ENCODE measurements at regions of chr10 and their contacts with region 1.

Region 1: GRCh38 chr10:88990384-88991160 is at the start of gene FAS:
- DNase-seq: peak; percentile 91
- ATAC-seq: peak; percentile 83
- total RNA-seq, gene FAS: 4.7 TPM

Region 2: GRCh38 chr10:88835096-88835909 is 155.3 kb before region 1 on chr10:
- intact Hi-C with region 1: loop called (anchors 5 kb)
- DNase-seq: peak; percentile 83
- ATAC-seq: peak; percentile 94

Region 3: DNA sequence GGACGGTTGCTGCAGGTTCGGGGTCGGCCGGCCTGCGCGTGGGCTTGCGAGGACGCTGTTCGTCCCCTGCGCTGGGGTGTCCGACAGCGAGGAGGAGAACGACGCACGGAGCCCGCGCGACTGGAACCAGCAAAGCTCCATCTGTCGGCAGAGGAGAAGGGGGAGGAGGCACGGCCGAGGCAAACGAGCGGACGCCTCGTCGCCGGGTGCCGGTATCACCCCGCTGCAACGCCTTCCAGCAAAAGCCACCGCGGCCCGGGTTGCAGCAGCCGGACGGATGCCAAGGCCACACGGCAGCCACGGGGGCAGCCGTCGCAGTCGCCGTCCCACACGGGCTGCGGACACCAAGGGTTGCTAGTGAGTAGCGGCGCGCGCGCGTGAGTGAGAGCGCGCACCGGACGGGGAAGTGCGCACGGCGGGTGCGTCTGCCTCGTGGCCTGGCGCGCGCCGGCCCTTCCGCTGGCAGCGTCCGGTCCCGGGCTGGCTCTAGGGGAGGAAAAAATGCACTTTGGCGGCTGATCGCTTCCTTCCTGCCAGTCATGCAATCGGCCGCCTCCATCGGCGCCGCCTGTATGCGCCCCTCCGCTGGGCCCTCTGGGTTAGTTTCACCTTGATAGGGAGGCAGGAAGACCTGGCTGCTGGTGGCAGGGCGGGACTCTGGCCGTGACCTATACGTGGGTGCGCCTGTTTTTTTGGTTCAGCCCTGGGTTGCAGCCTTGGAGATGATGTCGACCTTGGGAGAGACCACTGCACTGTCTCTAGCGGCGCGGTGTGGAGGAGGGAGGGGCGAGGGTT is 110.1 kb before region 1 on chr10:
- intact Hi-C with region 1: loop called (anchors 5 kb)
- DNase-seq: peak; percentile 95
- ATAC-seq: peak; percentile 96

Region 4: GRCh38 chr10:88932539-88933256 is 57.9 kb before region 1 on chr10:
- intact Hi-C with region 1: loop called (anchors 1 kb)
- DNase-seq: no peak
- ATAC-seq: peak; percentile 74

Region 5: DNA sequence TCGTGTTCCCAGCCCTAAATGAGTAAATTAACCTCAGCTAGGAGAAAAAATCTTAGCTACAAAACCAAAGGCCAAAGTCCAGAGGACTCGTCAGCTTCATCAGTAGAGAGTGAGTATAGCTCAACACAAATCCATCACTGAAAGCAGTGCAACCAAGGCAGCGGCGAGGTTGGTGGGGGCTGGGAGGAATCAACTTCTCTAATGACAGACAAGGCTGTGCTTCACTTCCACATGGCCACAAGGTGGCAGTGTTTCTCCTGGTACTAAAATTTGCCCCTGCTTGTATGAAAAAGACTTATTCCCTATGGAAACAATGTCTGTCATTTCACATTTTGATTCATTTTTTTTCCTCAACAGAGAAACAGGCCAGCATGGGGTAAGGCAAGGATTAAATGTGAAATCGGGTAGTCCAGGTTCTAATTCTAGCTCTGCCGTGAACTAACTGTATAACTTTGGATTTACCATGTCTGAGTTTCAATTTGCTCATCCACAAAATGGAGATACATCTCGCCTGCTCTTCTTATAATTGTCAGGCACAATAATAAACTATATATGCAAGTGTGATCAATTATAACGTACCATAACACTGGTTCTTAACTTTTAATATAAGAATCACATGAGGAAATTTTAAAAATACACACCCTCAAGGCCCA is 39.3 kb after region 1 on chr10:
- intact Hi-C with region 1: loop called (anchors 5 kb)
- DNase-seq: peak; percentile 84
- ATAC-seq: peak; percentile 56

Region 6: GRCh38 chr10:89217057-89217990 is 226.8 kb after region 1 on chr10:
- intact Hi-C with region 1: loop called (anchors 2 kb)
- DNase-seq: no peak
- ATAC-seq: no peak